ENCODE measurements at regions of chr2 and their contacts with region 1.

Region 1: GRCh38 chr2:85066874-85067351 is 66.3 kb upstream of the TCF7L1 start:
- DNase-seq: peak; percentile 77 to 87
- ATAC-seq: peak; percentile 88 to 93
- H3K4me3 ChIP-seq: peak overlapping the region; percentile 21; the same call in 2 of the 3 replicates
- H3K27ac ChIP-seq: peak overlapping the region; percentile 45 to 68; a peak in 4 of 6 replicates
- H3K4me1 ChIP-seq: no peaks in the 10 kb centered on the region
- CTCF ChIP-seq: peak; percentile 97
- EP300 ChIP-seq: no peak
- POLR2A ChIP-seq: no peak
- RAD21 ChIP-seq: peak; percentile 94

Region 2: DNA sequence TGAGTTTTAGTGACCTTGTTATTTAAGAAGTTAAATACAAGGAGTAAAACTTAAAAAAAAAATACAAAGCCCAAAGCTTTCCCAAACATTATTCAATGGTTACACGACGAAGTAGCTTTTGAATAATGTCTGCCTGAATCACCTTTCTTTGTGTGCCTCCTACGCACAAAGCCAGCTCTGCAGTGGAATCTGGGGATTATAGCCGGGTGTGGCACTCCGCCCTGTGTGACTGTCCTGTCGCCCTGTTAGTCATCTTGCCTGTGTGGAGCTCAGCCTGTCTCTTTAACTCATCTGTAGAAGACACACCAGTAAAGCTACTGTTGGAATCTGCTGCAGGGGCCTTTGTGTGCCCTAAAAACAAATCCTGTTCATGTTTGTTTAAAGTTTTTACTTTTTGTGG is 13.1 kb before region 1 on chr2:
- CTCF ChIA-PET with region 1: interaction called, 90 read pairs
- POLR2A ChIA-PET with region 1: interaction called, 3 read pairs
- DNase-seq: peak; percentile 60 to 83
- ATAC-seq: peak; percentile 81 to 88
- H3K4me3 ChIP-seq: no peak overlapping the region
- H3K27ac ChIP-seq: peak overlapping the region; percentile 44 to 53; a peak in 5 of 6 replicates
- H3K4me1 ChIP-seq: peaks cover 27% of the 10 kb centered on the region
- CTCF ChIP-seq: no peak
- EP300 ChIP-seq: no peak
- POLR2A ChIP-seq: no peak
- RAD21 ChIP-seq: no peak

Region 3: DNA sequence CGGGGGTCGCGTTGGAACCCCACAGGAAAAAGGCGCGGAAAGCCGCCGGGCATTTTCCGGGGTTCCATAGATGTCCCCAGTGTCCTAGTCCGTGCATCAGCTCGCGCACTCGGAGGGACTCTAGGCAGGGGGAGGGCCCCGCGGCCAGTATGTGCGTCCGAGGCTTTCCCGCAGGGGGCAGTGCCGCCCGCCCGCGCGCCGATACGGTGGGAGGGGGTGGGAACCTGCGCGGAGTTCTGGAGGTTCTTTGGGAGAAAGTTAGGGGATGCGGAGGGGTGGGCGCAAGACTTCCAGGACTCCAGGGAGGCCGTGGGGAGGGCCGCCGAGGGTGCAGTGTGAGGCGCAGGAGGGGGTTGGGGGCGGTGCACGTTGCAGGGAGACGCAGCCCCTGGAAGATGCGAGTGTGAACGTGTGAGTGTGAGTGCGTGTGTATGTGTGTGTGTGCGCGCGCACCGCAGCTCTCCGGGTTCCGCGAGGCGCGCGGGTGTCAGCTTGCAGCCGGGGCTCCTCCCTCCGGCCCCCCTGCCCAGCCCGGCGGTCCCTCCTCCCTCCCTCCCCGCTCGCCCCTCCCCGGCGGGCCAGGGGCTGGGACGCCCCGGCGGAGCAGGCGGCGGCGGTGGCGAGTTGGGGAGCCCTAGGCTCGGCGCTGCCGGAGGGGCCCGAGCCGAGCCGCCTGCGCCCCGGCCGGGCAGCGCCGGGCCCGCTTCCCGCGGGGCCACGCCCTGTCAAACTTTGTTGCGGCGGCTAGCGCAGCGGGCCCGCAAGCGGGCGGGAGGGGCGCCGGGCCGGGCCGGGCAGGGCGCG is 66.1 kb after region 1 on chr2 and contains the start of gene TCF7L1:
- CTCF ChIA-PET with region 1: interaction called, 56 read pairs
- POLR2A ChIA-PET with region 1: interaction called, 4 read pairs
- DNase-seq: peak; percentile 89 to 93
- ATAC-seq: peak; percentile 87 to 96
- H3K4me3 ChIP-seq: peak within 1 kb of the TSS; percentile 61
- H3K27ac ChIP-seq: peak within 1 kb of the TSS; percentile 76 to 90
- H3K4me1 ChIP-seq: peaks cover 9% of the 10 kb centered on the region
- CTCF ChIP-seq: peak; percentile 78
- EP300 ChIP-seq: no peak
- POLR2A ChIP-seq: peak; percentile 70
- RAD21 ChIP-seq: peak; percentile 72 to 86
- polyA plus RNA-seq, gene TCF7L1: 0.68 and 0.95 TPM in 2 replicates

Region 4: GRCh38 chr2:85266146-85267041 is 199.5 kb after region 1 on chr2:
- CTCF ChIA-PET with region 1: interaction called, 17 read pairs
- POLR2A ChIA-PET with region 1: no interaction called
- DNase-seq: peak; percentile 67 to 74
- ATAC-seq: peak in 1 of 2 experiments; percentile 93; a peak in 3 of 6 replicates
- H3K4me3 ChIP-seq: no peak overlapping the region
- H3K27ac ChIP-seq: no peak overlapping the region
- H3K4me1 ChIP-seq: no peaks in the 10 kb centered on the region
- CTCF ChIP-seq: peak; percentile 92
- EP300 ChIP-seq: no peak
- POLR2A ChIP-seq: no peak
- RAD21 ChIP-seq: peak; percentile 55 to 68

Region 5: GRCh38 chr2:85302121-85302520 is 235.2 kb after region 1 on chr2:
- CTCF ChIA-PET with region 1: interaction called, 371 read pairs
- POLR2A ChIA-PET with region 1: no interaction called
- DNase-seq: no peak
- ATAC-seq: no peak; a peak in 1 of 6 replicates
- H3K4me3 ChIP-seq: no peak overlapping the region
- H3K27ac ChIP-seq: no peak overlapping the region
- H3K4me1 ChIP-seq: no peaks in the 10 kb centered on the region
- CTCF ChIP-seq: no peak
- EP300 ChIP-seq: no peak
- POLR2A ChIP-seq: no peak
- RAD21 ChIP-seq: no peak